ENCODE measurements at regions of chr7 and their contacts with region 1.

Region 1: GRCh38 chr7:112495810-112496462 is 15.1 kb downstream of the LSMEM1 start:
- DNase-seq: peak in 1 of 2 donors; percentile 52
- ATAC-seq: peak; percentile 67 to 88 (median 86)
- H3K4me3 ChIP-seq: no peak overlapping the region
- H3K27ac ChIP-seq: no peak overlapping the region
- H3K4me1 ChIP-seq: peaks cover 0 to 11% (median 0%) of the 10 kb centered on the region in 9 donors
- H3K27me3 ChIP-seq: no peaks in the 10 kb centered on the region
- CTCF ChIP-seq: peak; percentile 25 to 77 (median 63)

Region 2: GRCh38 chr7:111741811-111742240 is 754.1 kb before region 1 on chr7:
- intact Hi-C with region 1: loop called in 3 of 10 experiments (anchors 5 to 10 kb)
- DNase-seq: peak in 1 of 2 donors; percentile 24
- ATAC-seq: peak in 7 of 8 donors; percentile 34 to 76 (median 64)
- H3K4me3 ChIP-seq: no peak overlapping the region
- H3K27ac ChIP-seq: no peak overlapping the region
- H3K4me1 ChIP-seq: peaks cover 0 to 3% (median 0%) of the 10 kb centered on the region in 9 donors
- H3K27me3 ChIP-seq: no peaks in the 10 kb centered on the region
- CTCF ChIP-seq: peak; percentile 31 to 76 (median 63)

Region 3: GRCh38 chr7:111752022-111752582 is 743.8 kb before region 1 on chr7:
- intact Hi-C with region 1: loop called in 4 of 10 experiments (anchors 5 to 10 kb)
- DNase-seq: peak; percentile 52 to 53
- ATAC-seq: peak in 5 of 8 donors; percentile 29 to 65 (median 62)
- H3K4me3 ChIP-seq: no peak overlapping the region
- H3K27ac ChIP-seq: no peak overlapping the region
- H3K4me1 ChIP-seq: no peaks in the 10 kb centered on the region
- H3K27me3 ChIP-seq: no peaks in the 10 kb centered on the region
- CTCF ChIP-seq: peak; percentile 36 to 85 (median 75)

Region 4: GRCh38 chr7:111953611-111954010 is 542.3 kb before region 1 on chr7:
- intact Hi-C with region 1: loop called in 1 of 10 experiments (anchors 10 kb)
- DNase-seq: peak in 1 of 2 donors; percentile 26
- ATAC-seq: peak; percentile 60 to 85 (median 75)
- H3K4me3 ChIP-seq: no peak overlapping the region
- H3K27ac ChIP-seq: peak overlapping the region in 4 of 10 donors; percentile 18 to 61 (median 55)
- H3K4me1 ChIP-seq: peaks cover 5 to 48% (median 29%) of the 10 kb centered on the region in 9 donors
- H3K27me3 ChIP-seq: no peaks in the 10 kb centered on the region
- CTCF ChIP-seq: peak in 6 of 9 donors; percentile 14 to 56 (median 38)

Region 5: GRCh38 chr7:112383671-112384417 is 112.1 kb before region 1 on chr7:
- intact Hi-C with region 1: no loop called
- DNase-seq: no peak
- ATAC-seq: no peak
- H3K4me3 ChIP-seq: no peak overlapping the region
- H3K27ac ChIP-seq: no peak overlapping the region
- H3K4me1 ChIP-seq: no peaks in the 10 kb centered on the region
- H3K27me3 ChIP-seq: no peaks in the 10 kb centered on the region
- CTCF ChIP-seq: peak in 4 of 9 donors; percentile 18 to 39 (median 26)

Region 6: GRCh38 chr7:112422842-112423496 is 73.0 kb before region 1 on chr7:
- intact Hi-C with region 1: loop called in 2 of 10 experiments (anchors 10 kb)
- DNase-seq: peak; percentile 55 to 63
- ATAC-seq: peak; percentile 89 to 97 (median 93)
- H3K4me3 ChIP-seq: no peak overlapping the region
- H3K27ac ChIP-seq: peak overlapping the region in 4 of 10 donors; percentile 0 to 49 (median 30)
- H3K4me1 ChIP-seq: peaks cover 0 to 23% (median 12%) of the 10 kb centered on the region in 9 donors
- H3K27me3 ChIP-seq: no peaks in the 10 kb centered on the region
- CTCF ChIP-seq: no peak

Region 7: GRCh38 chr7:112449902-112450806 is 45.8 kb before region 1 on chr7 and contains the start of gene IFRD1:
- intact Hi-C with region 1: loop called in 1 of 10 experiments (anchors 5 kb)
- DNase-seq: peak; percentile 99
- ATAC-seq: peak; percentile 90 to 96 (median 94)
- H3K4me3 ChIP-seq: peak within 1 kb of the TSS; percentile 77 to 97 (median 90)
- H3K27ac ChIP-seq: peak within 1 kb of the TSS; percentile 91 to 99 (median 96)
- H3K4me1 ChIP-seq: peaks cover 0 to 49% (median 39%) of the 10 kb centered on the region in 9 donors
- H3K27me3 ChIP-seq: no peaks in the 10 kb centered on the region
- CTCF ChIP-seq: no peak
- total RNA-seq, gene IFRD1: 17.5 to 94.6 (median 26.2) TPM

Measured in heart right ventricle (tissue), 16 donors.